ENCODE measurements at regions of chr14 and their contacts with region 1.

Region 1: GRCh38 chr14:93970549-93970946 is 5.8 kb downstream of the ASB2 start:
- DNase-seq: no peak
- ATAC-seq: peak; percentile 66
- H3K4me3 ChIP-seq: peak overlapping the region; percentile 37; the same call in 1 of the 2 replicates
- H3K27ac ChIP-seq: peak overlapping the region; percentile 85
- H3K4me1 ChIP-seq: peaks cover 92% of the 10 kb centered on the region
- H3K27me3 ChIP-seq: no peaks in the 10 kb centered on the region
- CTCF ChIP-seq: peak; percentile 38 to 53 (median 47); a peak in 5 of 6 replicates
- EP300 ChIP-seq: no peak
- POLR2A ChIP-seq: no peak
- RAD21 ChIP-seq: peak; percentile 65

Region 2: GRCh38 chr14:93657875-93658274 is 312.7 kb before region 1 on chr14:
- CTCF ChIA-PET with region 1: no interaction called
- POLR2A ChIA-PET with region 1: no interaction called
- RAD21 ChIA-PET with region 1: no interaction called
- SMC1A ChIA-PET with region 1: no interaction called
- in situ Hi-C with region 1: no loop called
- intact Hi-C with region 1: no loop called
- DNase-seq: no peak
- ATAC-seq: no peak
- H3K4me3 ChIP-seq: no peak overlapping the region
- H3K27ac ChIP-seq: no peak overlapping the region
- H3K4me1 ChIP-seq: no peaks in the 10 kb centered on the region
- H3K27me3 ChIP-seq: no peaks in the 10 kb centered on the region
- CTCF ChIP-seq: no peak
- EP300 ChIP-seq: no peak
- POLR2A ChIP-seq: no peak
- RAD21 ChIP-seq: no peak

Region 3: GRCh38 chr14:93953263-93953662 is 17.3 kb before region 1 on chr14:
- CTCF ChIA-PET with region 1: interaction called, 73 read pairs
- POLR2A ChIA-PET with region 1: interaction called, 128 read pairs
- RAD21 ChIA-PET with region 1: interaction called, 324 read pairs
- SMC1A ChIA-PET with region 1: interaction called, 409 read pairs
- in situ Hi-C with region 1: no loop called
- intact Hi-C with region 1: loop called (anchors 2 kb)
- DNase-seq: no peak
- ATAC-seq: no peak
- H3K4me3 ChIP-seq: no peak overlapping the region
- H3K27ac ChIP-seq: no peak overlapping the region
- H3K4me1 ChIP-seq: peaks cover 59% of the 10 kb centered on the region
- H3K27me3 ChIP-seq: no peaks in the 10 kb centered on the region
- CTCF ChIP-seq: peak in 2 of 3 experiments; percentile 27 to 39; a peak in 3 of 6 replicates
- EP300 ChIP-seq: no peak
- POLR2A ChIP-seq: no peak
- RAD21 ChIP-seq: peak; percentile 57

Region 4: GRCh38 chr14:93984987-93985410 is 14.5 kb after region 1 on chr14:
- CTCF ChIA-PET with region 1: interaction called, 21 read pairs
- POLR2A ChIA-PET with region 1: interaction called, 10 read pairs
- RAD21 ChIA-PET with region 1: interaction called, 324 read pairs
- SMC1A ChIA-PET with region 1: interaction called, 25 read pairs
- in situ Hi-C with region 1: no loop called
- intact Hi-C with region 1: no loop called
- DNase-seq: no peak
- ATAC-seq: peak; percentile 51
- H3K4me3 ChIP-seq: no peak overlapping the region
- H3K27ac ChIP-seq: no peak overlapping the region
- H3K4me1 ChIP-seq: peaks cover 18% of the 10 kb centered on the region
- H3K27me3 ChIP-seq: no peaks in the 10 kb centered on the region
- CTCF ChIP-seq: peak; percentile 19 to 40 (median 33); a peak in 5 of 6 replicates
- EP300 ChIP-seq: no peak
- POLR2A ChIP-seq: no peak
- RAD21 ChIP-seq: peak; percentile 41

Region 5: DNA sequence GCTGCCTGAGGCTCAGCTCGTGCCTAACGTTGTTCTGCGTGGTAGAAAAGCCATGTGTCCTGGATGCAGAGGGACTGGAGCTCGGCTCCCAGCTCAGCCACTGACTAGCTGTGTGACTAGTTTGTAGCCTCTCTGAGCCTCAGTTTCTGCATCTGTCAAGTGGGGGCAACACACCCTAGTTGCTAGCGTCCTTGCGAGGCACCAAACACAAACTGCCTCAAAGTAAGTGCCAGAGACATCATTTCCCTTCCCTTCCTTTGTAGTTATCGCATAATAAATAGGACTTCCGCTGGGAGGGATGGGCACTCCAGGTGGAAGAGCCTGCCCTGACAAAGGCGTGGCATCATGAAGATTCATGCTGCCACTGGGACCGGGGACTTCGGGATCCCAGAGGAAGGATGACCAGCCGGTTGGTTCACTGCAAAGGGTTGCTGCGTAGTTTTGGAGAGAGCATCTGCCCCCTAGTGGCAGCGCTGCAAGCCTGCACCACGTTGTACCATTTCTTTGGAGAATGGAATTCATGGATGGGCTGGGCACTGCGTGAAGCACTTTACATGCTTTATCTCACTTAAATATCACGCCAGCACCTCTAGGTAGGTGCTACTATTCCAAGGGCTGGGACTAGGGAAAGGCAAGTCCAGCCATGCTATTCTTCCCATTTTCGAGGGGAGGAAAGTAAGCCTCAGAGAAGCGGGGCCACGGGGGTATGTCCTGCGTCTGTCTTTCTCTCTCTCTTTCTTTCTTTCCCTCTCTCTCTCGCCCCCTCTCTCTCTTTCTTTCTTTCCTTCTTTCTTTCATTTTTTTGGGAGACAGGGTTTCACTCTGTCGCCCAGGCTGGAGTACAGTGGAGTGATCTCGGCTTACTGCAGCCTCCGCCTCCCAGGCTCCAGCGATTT is 31.2 kb after region 1 on chr14:
- CTCF ChIA-PET with region 1: interaction called, 399 read pairs
- POLR2A ChIA-PET with region 1: interaction called, 33 read pairs
- RAD21 ChIA-PET with region 1: interaction called, 182 read pairs
- SMC1A ChIA-PET with region 1: interaction called, 155 read pairs
- in situ Hi-C with region 1: no loop called
- intact Hi-C with region 1: loop called (anchors 2 kb)
- DNase-seq: no peak
- ATAC-seq: peak; percentile 83
- H3K4me3 ChIP-seq: no peak overlapping the region
- H3K27ac ChIP-seq: no peak overlapping the region
- H3K4me1 ChIP-seq: peaks cover 26% of the 10 kb centered on the region
- H3K27me3 ChIP-seq: no peaks in the 10 kb centered on the region
- CTCF ChIP-seq: peak; percentile 93 to 98 (median 97); a peak in 5 of 6 replicates
- EP300 ChIP-seq: no peak
- POLR2A ChIP-seq: no peak
- RAD21 ChIP-seq: peak; percentile 95

Region 6: DNA sequence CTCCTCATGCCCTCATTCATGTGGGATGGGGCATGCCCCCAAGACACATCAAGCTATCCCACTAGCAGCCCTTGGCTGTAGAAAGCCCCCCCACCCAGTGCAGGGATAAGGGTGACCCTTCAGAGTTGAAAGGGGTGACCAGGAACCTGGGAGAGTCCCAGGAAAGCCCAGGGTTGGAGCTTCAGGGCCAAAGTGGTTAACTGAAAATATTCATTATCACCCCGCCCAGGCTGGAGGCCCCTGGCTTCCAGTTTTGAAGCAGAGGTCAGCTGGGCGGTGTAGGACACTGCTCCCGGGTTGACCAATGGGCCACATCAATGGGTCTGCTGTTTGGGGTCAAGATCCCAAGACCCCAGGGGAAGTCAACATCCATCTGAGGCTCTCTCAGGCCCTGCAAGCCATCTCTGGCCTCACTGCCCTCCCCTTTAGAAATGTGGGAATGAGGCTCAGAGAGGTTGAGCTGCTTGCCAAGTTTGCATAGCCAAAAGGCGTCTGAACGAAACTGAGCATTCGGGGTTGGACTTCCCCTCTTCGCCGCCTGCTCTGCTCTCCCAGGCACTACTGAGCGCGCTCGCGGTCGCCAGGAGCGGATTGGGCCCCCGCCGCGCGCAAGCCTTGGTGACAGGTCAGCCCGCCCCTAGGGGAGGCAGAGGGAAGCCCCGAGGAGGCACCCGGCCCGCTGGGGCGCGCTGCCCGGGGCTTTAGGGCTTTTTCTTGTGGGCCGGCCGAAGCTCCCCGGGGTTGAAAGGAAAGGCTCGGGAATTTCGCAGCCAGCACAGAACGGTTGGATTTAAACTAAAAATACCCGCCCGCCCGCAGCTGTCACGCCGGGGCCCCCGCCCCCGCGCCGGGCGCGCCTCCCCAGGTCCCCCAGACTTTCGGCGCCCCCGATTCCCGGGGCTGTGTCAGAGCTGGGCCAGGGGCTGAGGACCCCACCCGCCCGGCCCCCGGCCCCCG is 1545.3 kb after region 1 on chr14:
- CTCF ChIA-PET with region 1: no interaction called
- POLR2A ChIA-PET with region 1: no interaction called
- RAD21 ChIA-PET with region 1: no interaction called
- SMC1A ChIA-PET with region 1: no interaction called
- in situ Hi-C with region 1: loop called (anchors 10 kb)
- intact Hi-C with region 1: no loop called
- DNase-seq: no peak
- ATAC-seq: peak; percentile 87
- H3K4me3 ChIP-seq: peak overlapping the region; percentile 85
- H3K27ac ChIP-seq: peak overlapping the region; percentile 90
- H3K4me1 ChIP-seq: peaks cover 53% of the 10 kb centered on the region
- H3K27me3 ChIP-seq: no peaks in the 10 kb centered on the region
- CTCF ChIP-seq: peak; percentile 35 to 58 (median 46)
- EP300 ChIP-seq: 0 out of 4 replicates have a peak, but pooled peaks of 1 of the 2 experiments have one; percentile 6
- POLR2A ChIP-seq: 0 out of 2 replicates have a peak, but pooled peaks have one; percentile 59
- RAD21 ChIP-seq: peak; percentile 44